Left lung (tissue), 14 donors: ENCODE measurements at regions of chr2 and their contacts with region 1.

Region 1: GRCh38 chr2:137947728-137948336 is 16.4 kb upstream of the HNMT start:
- DNase-seq: peak in 2 of 4 donors; percentile 71
- ATAC-seq: peak; percentile 93
- H3K4me3 ChIP-seq: no peak overlapping the region
- H3K27ac ChIP-seq: no peak overlapping the region
- H3K4me1 ChIP-seq: no peaks in the 10 kb centered on the region
- H3K27me3 ChIP-seq: no peaks in the 10 kb centered on the region
- CTCF ChIP-seq: peak; percentile 31 to 60

Region 2: GRCh38 chr2:138090330-138090729 is 142.5 kb after region 1 on chr2:
- intact Hi-C with region 1: loop called in 1 of 2 experiments (anchors 10 kb)
- DNase-seq: peak in 2 of 4 donors; percentile 10 to 26
- ATAC-seq: peak; percentile 89
- H3K4me3 ChIP-seq: no peak overlapping the region
- H3K27ac ChIP-seq: no peak overlapping the region
- H3K4me1 ChIP-seq: peaks cover 0 to 5% of the 10 kb centered on the region in 2 donors
- H3K27me3 ChIP-seq: no peaks in the 10 kb centered on the region
- CTCF ChIP-seq: peak; percentile 52 to 61